ENCODE measurements at regions of chr12 and their contacts with region 1.

Region 1: GRCh38 chr12:46661110-46661845 is 164.5 kb downstream of the SLC38A4 start:
- DNase-seq: peak in 1 of 2 experiments; percentile 72
- H3K4me3 ChIP-seq: no peak overlapping the region
- H3K4me3 Mint-ChIP-seq: no peak overlapping the region
- H3K27ac Mint-ChIP-seq: no peak overlapping the region
- H3K4me1 ChIP-seq: peaks cover 16% of the 10 kb centered on the region
- H3K4me1 Mint-ChIP-seq: peaks cover 26% of the 10 kb centered on the region
- H3K27me3 ChIP-seq: no peaks in the 10 kb centered on the region
- H3K27me3 Mint-ChIP-seq: no peaks in the 10 kb centered on the region
- CTCF ChIP-seq: peak; percentile 76 to 91

Region 2: GRCh38 chr12:46131729-46132469 is 529.4 kb before region 1 on chr12:
- CTCF ChIA-PET with region 1: interaction called, 3 read pairs
- POLR2A ChIA-PET with region 1: no interaction called
- intact Hi-C with region 1: loop called (anchors 5 kb)
- DNase-seq: peak; percentile 49 to 60
- H3K4me3 ChIP-seq: no peak overlapping the region
- H3K4me3 Mint-ChIP-seq: no peak overlapping the region
- H3K27ac Mint-ChIP-seq: no peak overlapping the region
- H3K4me1 ChIP-seq: peaks cover 18% of the 10 kb centered on the region
- H3K4me1 Mint-ChIP-seq: peaks cover 25% of the 10 kb centered on the region
- H3K27me3 ChIP-seq: no peaks in the 10 kb centered on the region
- H3K27me3 Mint-ChIP-seq: peaks cover 5% of the 10 kb centered on the region
- CTCF ChIP-seq: peak; percentile 32 to 78

Region 3: GRCh38 chr12:46342562-46343033 is 318.7 kb before region 1 on chr12:
- CTCF ChIA-PET with region 1: no interaction called
- POLR2A ChIA-PET with region 1: no interaction called
- intact Hi-C with region 1: loop called (anchors 1 kb)
- DNase-seq: peak; percentile 41 to 63
- H3K4me3 ChIP-seq: no peak overlapping the region
- H3K4me3 Mint-ChIP-seq: no peak overlapping the region
- H3K27ac Mint-ChIP-seq: no peak overlapping the region
- H3K4me1 ChIP-seq: no peaks in the 10 kb centered on the region
- H3K4me1 Mint-ChIP-seq: no peaks in the 10 kb centered on the region
- H3K27me3 ChIP-seq: no peaks in the 10 kb centered on the region
- H3K27me3 Mint-ChIP-seq: peaks cover 5% of the 10 kb centered on the region
- CTCF ChIP-seq: peak; percentile 60 to 71

Region 4: GRCh38 chr12:46357438-46358324 is 303.6 kb before region 1 on chr12:
- CTCF ChIA-PET with region 1: interaction called, 17 read pairs
- POLR2A ChIA-PET with region 1: no interaction called
- intact Hi-C with region 1: no loop called
- DNase-seq: no peak
- H3K4me3 ChIP-seq: no peak overlapping the region
- H3K4me3 Mint-ChIP-seq: no peak overlapping the region
- H3K27ac Mint-ChIP-seq: peak overlapping the region; percentile 16
- H3K4me1 ChIP-seq: peaks cover 12% of the 10 kb centered on the region
- H3K4me1 Mint-ChIP-seq: no peaks in the 10 kb centered on the region
- H3K27me3 ChIP-seq: no peaks in the 10 kb centered on the region
- H3K27me3 Mint-ChIP-seq: no peaks in the 10 kb centered on the region
- CTCF ChIP-seq: no peak

Region 5: DNA sequence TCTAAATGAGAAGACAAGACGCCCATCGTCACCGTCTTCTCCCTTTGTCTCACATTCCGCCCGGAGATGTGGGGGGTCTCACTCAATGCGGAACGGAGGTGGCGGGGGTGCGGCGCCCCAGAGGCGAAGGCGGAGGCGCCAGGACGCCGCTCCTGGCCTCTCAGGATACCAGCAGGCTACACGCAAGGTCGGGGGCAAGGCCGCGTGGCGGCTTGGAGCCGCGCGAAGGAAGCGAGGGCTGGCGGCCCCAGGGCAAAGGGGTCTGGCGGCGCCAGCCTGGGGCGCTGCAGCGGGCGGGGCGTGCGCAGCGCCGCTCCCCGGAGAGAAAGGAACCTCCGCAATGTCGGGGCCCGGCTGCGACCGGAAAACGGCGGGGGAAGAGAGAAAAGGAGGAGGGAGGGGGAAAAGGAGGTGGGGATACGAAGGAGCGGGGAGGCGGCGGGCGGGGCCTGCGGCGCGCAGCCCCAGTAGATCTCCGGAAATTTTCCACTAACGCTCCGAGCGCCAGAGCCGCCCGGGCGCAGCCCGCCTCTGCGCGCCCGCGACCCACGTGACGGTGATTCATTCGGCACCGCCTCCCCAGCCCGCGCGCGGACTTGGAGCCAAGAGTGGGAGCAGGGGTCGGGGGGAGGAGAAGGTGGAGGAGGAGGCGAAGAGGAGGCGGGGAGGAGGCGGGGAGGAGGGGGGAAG is 278.2 kb before region 1 on chr12:
- CTCF ChIA-PET with region 1: interaction called, 10 read pairs
- POLR2A ChIA-PET with region 1: interaction called, 5 read pairs
- intact Hi-C with region 1: loop called (anchors 1 kb)
- DNase-seq: peak; percentile 97 to 98
- H3K4me3 ChIP-seq: peak overlapping the region; percentile 94
- H3K4me3 Mint-ChIP-seq: peak overlapping the region; percentile 77
- H3K27ac Mint-ChIP-seq: peak overlapping the region; percentile 99
- H3K4me1 ChIP-seq: peaks cover 47% of the 10 kb centered on the region
- H3K4me1 Mint-ChIP-seq: peaks cover 38% of the 10 kb centered on the region
- H3K27me3 ChIP-seq: no peaks in the 10 kb centered on the region
- H3K27me3 Mint-ChIP-seq: no peaks in the 10 kb centered on the region
- CTCF ChIP-seq: peak in 1 of 2 experiments; percentile 17

Region 6: DNA sequence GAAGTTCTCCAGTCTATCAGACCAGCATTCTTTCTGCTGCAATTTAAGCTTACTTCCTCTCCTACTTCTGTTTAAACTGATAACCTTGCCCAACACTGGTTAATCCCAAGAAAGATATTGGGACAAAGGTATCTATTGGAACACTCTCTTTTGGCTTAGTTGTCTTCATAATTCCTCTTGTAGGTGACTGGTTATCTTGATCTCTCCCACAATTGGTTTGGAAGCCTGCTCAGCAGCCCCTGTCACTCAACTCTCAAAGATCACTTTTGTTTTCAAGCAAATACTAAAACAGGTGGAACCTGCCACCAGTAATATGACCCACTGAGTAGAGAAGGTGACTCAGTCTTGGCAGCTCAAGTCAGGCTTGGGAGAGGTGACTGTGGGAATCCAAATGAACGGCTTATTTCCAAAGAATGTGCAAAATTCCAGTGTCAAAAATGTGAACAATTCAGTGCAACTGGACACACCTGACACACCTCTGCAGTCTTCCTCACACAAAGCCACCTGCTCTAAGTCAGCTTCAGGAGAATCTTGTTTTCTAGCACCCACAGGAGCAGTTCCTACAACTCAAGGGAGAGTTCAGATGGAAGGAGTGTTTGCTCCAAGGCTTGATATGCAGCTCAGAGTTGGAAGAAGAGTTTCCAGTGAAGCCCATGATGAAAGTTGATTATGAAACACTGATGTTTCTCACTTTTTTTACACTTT is 205.5 kb before region 1 on chr12:
- CTCF ChIA-PET with region 1: interaction called, 7 read pairs
- POLR2A ChIA-PET with region 1: no interaction called
- intact Hi-C with region 1: loop called (anchors 1 kb)
- DNase-seq: peak; percentile 84 to 87
- H3K4me3 ChIP-seq: no peak overlapping the region
- H3K4me3 Mint-ChIP-seq: peak overlapping the region; percentile 32
- H3K27ac Mint-ChIP-seq: peak overlapping the region; percentile 65
- H3K4me1 ChIP-seq: peaks cover 58% of the 10 kb centered on the region
- H3K4me1 Mint-ChIP-seq: peaks cover 46% of the 10 kb centered on the region
- H3K27me3 ChIP-seq: no peaks in the 10 kb centered on the region
- H3K27me3 Mint-ChIP-seq: no peaks in the 10 kb centered on the region
- CTCF ChIP-seq: no peak

Region 7: GRCh38 chr12:46492471-46493351 is 168.6 kb before region 1 on chr12:
- CTCF ChIA-PET with region 1: interaction called, 3 read pairs
- POLR2A ChIA-PET with region 1: no interaction called
- intact Hi-C with region 1: loop called (anchors 1 kb)
- DNase-seq: peak; percentile 80 to 83
- H3K4me3 ChIP-seq: no peak overlapping the region
- H3K4me3 Mint-ChIP-seq: peak overlapping the region; percentile 53
- H3K27ac Mint-ChIP-seq: peak overlapping the region; percentile 79
- H3K4me1 ChIP-seq: peaks cover 52% of the 10 kb centered on the region
- H3K4me1 Mint-ChIP-seq: peaks cover 25% of the 10 kb centered on the region
- H3K27me3 ChIP-seq: no peaks in the 10 kb centered on the region
- H3K27me3 Mint-ChIP-seq: no peaks in the 10 kb centered on the region
- CTCF ChIP-seq: no peak

Measured in Caco-2 (cell line).